ENCODE measurements at regions of chr6 and their contacts with region 1.

Region 1: GRCh38 chr6:137944793-137945498 is 77.9 kb downstream of the TNFAIP3 start:
- DNase-seq: no peak
- H3K4me3 Mint-ChIP-seq: no peak overlapping the region
- H3K27ac Mint-ChIP-seq: peak overlapping the region; percentile 69
- H3K4me1 Mint-ChIP-seq: peaks cover 57% of the 10 kb centered on the region
- H3K27me3 Mint-ChIP-seq: no peaks in the 10 kb centered on the region

Region 2: DNA sequence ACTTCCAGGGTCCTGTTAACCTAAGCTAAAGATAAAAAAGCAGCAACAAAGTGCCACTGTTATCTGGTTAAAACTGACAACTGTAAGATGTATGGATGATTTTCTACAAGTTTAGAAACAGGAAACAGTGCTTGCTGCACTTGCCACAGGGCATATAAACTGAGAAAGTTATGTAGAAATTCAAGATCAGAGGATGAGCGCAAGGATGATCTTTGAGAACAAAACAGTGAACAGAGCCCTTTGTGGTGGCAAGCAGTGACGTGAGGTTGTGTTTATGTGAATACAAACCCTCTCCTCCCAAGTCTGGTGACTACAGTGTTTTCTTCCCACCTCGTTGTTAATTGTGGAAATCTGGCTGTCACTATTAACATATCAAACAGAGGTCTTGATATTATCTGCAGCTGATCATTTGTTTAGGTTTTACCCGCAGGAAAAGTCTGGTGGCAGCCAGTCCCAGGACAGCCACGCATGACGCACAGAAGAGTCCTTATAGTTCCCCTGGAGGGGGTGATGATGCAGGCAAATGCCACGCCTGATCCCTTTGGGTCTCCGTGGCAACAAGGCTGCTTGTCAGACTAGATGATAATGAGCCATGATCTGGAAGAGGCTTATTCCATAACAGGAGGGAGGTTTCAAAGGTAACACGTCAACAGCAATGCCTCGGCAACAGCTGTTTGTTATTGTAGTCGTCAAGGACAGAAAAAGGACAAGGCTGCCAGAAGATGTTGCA is 121.0 kb before region 1 on chr6:
- intact Hi-C with region 1: loop called (anchors 2 kb)
- DNase-seq: peak; percentile 70
- H3K4me3 Mint-ChIP-seq: peak overlapping the region; percentile 81
- H3K27ac Mint-ChIP-seq: peak overlapping the region; percentile 96
- H3K4me1 Mint-ChIP-seq: peaks cover 80% of the 10 kb centered on the region
- H3K27me3 Mint-ChIP-seq: no peaks in the 10 kb centered on the region

Region 3: GRCh38 chr6:137883400-137884148 is 61.4 kb before region 1 on chr6:
- intact Hi-C with region 1: loop called (anchors 2 kb)
- DNase-seq: no peak
- H3K4me3 Mint-ChIP-seq: no peak overlapping the region
- H3K27ac Mint-ChIP-seq: peak overlapping the region; percentile 91
- H3K4me1 Mint-ChIP-seq: peaks cover 53% of the 10 kb centered on the region
- H3K27me3 Mint-ChIP-seq: no peaks in the 10 kb centered on the region

Region 4: GRCh38 chr6:137927777-137928218 is 17.1 kb before region 1 on chr6:
- intact Hi-C with region 1: loop called (anchors 1 kb)
- DNase-seq: peak; percentile 74
- H3K4me3 Mint-ChIP-seq: peak overlapping the region; percentile 59
- H3K27ac Mint-ChIP-seq: peak overlapping the region; percentile 97
- H3K4me1 Mint-ChIP-seq: peaks cover 70% of the 10 kb centered on the region
- H3K27me3 Mint-ChIP-seq: no peaks in the 10 kb centered on the region

Region 5: GRCh38 chr6:137958811-137959565 is 14.0 kb after region 1 on chr6:
- intact Hi-C with region 1: no loop called
- DNase-seq: no peak
- H3K4me3 Mint-ChIP-seq: no peak overlapping the region
- H3K27ac Mint-ChIP-seq: no peak overlapping the region
- H3K4me1 Mint-ChIP-seq: peaks cover 16% of the 10 kb centered on the region
- H3K27me3 Mint-ChIP-seq: no peaks in the 10 kb centered on the region

Measured in activated T-helper 2 cell treated with anti-CD3 and anti-CD28 coated beads, Interferon-gamma antibody, Interleukin-2, Interleukin-4, amounts not matched to agents 10 μg/mL and 5 μg/mL and 100 μg/mL, durations not matched to agents 14 hours and 24 hours and 36 hours (primary cell).